Heart left ventricle (tissue), 16 donors: ENCODE measurements at regions of chr6 and their contacts with region 1.

Region 1: GRCh38 chr6:16964553-16965501 is 137.0 kb upstream of the STMND1 start:
- DNase-seq: peak; percentile 58 to 82 (median 70)
- ATAC-seq: peak; percentile 67 to 93 (median 90)
- H3K4me3 ChIP-seq: peak overlapping the region in 2 of 12 donors; percentile 21 to 22
- H3K27ac ChIP-seq: no peak overlapping the region
- H3K4me1 ChIP-seq: peaks cover 0 to 8% (median 4%) of the 10 kb centered on the region in 12 donors
- H3K27me3 ChIP-seq: peaks cover 0 to 4% (median 0%) of the 10 kb centered on the region in 9 donors
- CTCF ChIP-seq: peak; percentile 72 to 89 (median 84)
- POLR2A ChIP-seq: no peak

Region 2: DNA sequence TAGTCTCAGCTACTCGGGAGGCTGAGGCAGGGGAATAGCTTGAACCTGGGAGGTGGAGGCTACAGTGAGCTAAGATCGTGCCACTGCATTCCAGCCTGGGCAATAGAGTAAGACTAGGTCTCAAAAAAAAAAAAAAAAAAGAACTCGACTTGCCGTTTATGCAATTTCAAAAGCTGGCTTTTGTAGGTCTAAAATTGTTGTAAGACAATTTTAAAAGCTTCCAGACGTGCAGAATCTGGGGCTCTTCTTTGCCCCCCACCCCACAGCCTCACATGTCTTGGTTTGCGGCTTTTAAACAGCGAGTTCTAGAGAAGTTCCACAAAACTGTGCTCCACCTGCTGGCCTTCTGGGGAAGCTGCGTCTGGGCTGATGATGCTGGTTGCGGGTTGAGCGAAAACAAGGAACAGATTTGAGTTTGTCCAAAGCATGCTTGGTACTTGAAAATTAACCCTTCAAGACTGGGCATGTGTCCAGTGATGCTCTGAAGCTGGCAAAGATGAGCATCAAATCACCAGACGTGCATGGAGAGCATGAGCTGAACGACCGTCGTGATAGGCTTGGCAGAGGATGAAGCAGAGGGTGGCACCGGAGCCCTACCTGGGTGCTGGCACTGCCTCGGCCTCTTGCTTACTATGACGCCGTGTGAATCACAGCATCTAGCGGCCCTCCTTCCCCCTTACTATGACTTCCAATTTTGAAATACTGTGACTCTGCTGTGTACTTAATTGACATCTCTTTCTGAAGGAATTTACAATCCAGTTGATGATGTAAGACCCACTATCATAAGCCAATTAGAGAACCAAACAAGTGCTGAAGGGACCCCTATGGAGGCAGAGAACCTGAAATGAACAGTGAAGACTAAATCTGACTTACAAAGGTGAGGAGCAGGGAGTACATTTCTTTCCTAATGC is 555.0 kb before region 1 on chr6:
- intact Hi-C with region 1: loop called in 1 of 10 experiments (anchors 10 kb)
- DNase-seq: peak in 4 of 5 donors; percentile 48 to 68 (median 58)
- ATAC-seq: peak in 3 of 4 donors; percentile 53 to 70 (median 61)
- H3K4me3 ChIP-seq: no peak overlapping the region
- H3K27ac ChIP-seq: no peak overlapping the region
- H3K4me1 ChIP-seq: peaks cover 0 to 55% (median 17%) of the 10 kb centered on the region in 12 donors
- H3K27me3 ChIP-seq: no peaks in the 10 kb centered on the region
- CTCF ChIP-seq: peak; percentile 64 to 88 (median 80)
- POLR2A ChIP-seq: no peak

Region 3: DNA sequence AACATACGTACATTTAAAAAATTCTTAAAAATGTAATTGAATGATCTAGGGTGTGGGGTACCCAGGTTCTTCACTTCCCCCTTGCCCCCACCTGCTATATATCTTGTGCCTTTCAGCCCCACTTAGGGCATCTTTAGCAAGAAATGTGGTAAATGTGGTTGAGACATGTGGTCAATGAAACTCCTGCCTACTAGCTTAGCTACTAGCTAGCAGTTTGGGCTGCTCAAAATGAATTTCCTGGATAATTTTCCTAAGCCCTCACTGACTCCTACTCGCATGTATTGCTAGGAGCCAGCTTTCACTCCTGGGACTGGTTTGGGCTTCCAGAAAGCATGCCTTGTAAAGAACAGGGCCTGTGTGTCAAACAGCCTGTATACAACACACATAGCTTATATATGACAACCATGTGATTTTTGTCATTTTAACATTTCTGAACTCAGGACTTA is 460.8 kb before region 1 on chr6:
- intact Hi-C with region 1: loop called in 1 of 10 experiments (anchors 10 kb)
- DNase-seq: no peak
- ATAC-seq: peak in 1 of 4 donors; percentile 13
- H3K4me3 ChIP-seq: no peak overlapping the region
- H3K27ac ChIP-seq: no peak overlapping the region
- H3K4me1 ChIP-seq: peaks cover 0 to 26% (median 14%) of the 10 kb centered on the region in 12 donors
- H3K27me3 ChIP-seq: no peaks in the 10 kb centered on the region
- CTCF ChIP-seq: no peak
- POLR2A ChIP-seq: no peak

Region 4: GRCh38 chr6:16514249-16514648 is 450.6 kb before region 1 on chr6:
- intact Hi-C with region 1: loop called in 6 of 10 experiments (anchors 5 to 10 kb)
- DNase-seq: no peak
- ATAC-seq: peak; percentile 27 to 57 (median 30)
- H3K4me3 ChIP-seq: no peak overlapping the region
- H3K27ac ChIP-seq: no peak overlapping the region
- H3K4me1 ChIP-seq: peaks cover 0 to 60% (median 35%) of the 10 kb centered on the region in 12 donors
- H3K27me3 ChIP-seq: no peaks in the 10 kb centered on the region
- CTCF ChIP-seq: peak in 11 of 12 donors; percentile 22 to 61 (median 36)
- POLR2A ChIP-seq: no peak

Region 5: GRCh38 chr6:16770701-16771569 is 193.9 kb before region 1 on chr6:
- intact Hi-C with region 1: loop called in 7 of 10 experiments (anchors 2 to 5 kb)
- DNase-seq: peak; percentile 80 to 91 (median 84)
- ATAC-seq: peak; percentile 78 to 91 (median 85)
- H3K4me3 ChIP-seq: no peak overlapping the region
- H3K27ac ChIP-seq: peak overlapping the region in 4 of 12 donors; percentile 11 to 63 (median 28)
- H3K4me1 ChIP-seq: peaks cover 0 to 45% (median 31%) of the 10 kb centered on the region in 12 donors
- H3K27me3 ChIP-seq: no peaks in the 10 kb centered on the region
- CTCF ChIP-seq: peak; percentile 88 to 99 (median 93)
- POLR2A ChIP-seq: no peak

Region 6: DNA sequence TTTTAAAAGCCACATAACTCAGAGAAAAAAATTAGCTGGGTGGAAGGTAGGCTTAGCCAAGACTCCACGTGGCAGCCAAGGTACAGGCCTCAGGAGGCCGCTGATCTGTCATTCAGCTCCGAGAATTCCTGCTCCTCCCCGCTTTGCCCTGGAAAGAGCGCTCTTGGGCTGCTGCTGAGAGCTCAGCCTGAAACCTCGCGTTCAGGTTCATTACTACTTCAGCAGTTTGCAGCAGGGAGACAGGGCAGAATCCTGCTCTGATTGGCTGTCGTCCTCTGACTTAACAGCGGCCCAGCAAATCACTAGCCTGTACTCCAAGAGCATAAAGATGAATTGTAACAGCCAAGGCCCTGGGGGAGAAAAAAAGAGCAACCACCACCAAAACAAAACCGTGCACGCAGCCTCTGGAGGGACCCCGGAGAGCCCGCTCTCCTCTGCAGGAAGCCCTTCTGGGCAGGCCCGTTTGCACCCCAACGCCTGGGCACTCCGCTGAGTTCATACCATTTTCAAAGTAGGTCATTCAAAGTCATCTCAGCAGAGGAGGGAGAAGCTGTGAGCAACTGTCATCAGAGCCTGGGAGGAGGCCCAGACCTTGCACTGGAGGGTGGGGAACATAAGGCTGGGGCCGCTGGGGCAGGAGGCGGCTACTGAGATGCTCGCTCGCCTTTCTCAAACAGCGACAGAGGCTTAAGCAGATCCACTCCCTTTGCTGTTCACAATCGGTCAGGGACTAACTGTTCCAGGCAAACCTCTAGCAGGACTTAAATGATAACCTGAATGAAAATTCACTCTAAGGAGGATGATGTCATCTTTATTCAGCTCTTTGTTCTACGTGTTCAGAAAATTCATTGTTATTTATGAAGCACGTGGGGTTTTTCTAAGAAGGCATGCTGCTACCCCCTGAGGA is 161.3 kb before region 1 on chr6:
- intact Hi-C with region 1: loop called in 1 of 10 experiments (anchors 10 kb)
- DNase-seq: peak; percentile 64 to 71 (median 66)
- ATAC-seq: peak; percentile 79 to 92 (median 88)
- H3K4me3 ChIP-seq: peak overlapping the region in 9 of 12 donors; percentile 12 to 48 (median 39)
- H3K27ac ChIP-seq: peak overlapping the region in 11 of 12 donors; percentile 44 to 86 (median 78)
- H3K4me1 ChIP-seq: peaks cover 0 to 61% (median 38%) of the 10 kb centered on the region in 12 donors
- H3K27me3 ChIP-seq: no peaks in the 10 kb centered on the region
- CTCF ChIP-seq: peak in 1 of 12 donors; percentile 22
- POLR2A ChIP-seq: no peak

Region 7: DNA sequence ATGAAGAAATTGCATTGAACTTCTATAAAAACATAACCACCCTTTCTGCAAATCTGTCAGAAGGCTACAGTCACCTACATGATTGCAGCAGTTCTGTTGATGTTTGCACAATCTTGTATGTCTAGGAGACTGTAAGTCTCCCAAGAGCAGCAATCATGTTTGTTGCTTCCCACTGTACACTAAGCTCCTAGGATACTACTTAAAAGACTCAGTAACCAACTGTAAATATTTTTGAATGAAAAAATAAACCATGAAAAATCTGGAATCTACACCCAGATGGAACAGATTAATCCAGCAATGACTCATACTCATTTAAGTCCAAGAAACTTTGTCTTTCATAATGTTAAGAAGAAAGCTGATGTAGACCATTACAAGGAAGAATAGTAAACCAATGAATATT is 35.0 kb before region 1 on chr6:
- intact Hi-C with region 1: no loop called
- DNase-seq: no peak
- ATAC-seq: peak in 1 of 4 donors; percentile 24
- H3K4me3 ChIP-seq: no peak overlapping the region
- H3K27ac ChIP-seq: no peak overlapping the region
- H3K4me1 ChIP-seq: no peaks in the 10 kb centered on the region
- H3K27me3 ChIP-seq: peaks cover 0 to 4% (median 0%) of the 10 kb centered on the region in 9 donors
- CTCF ChIP-seq: no peak
- POLR2A ChIP-seq: no peak

Region 8: GRCh38 chr6:17086469-17086868 is 121.6 kb after region 1 on chr6:
- intact Hi-C with region 1: loop called in 4 of 10 experiments (anchors 5 to 10 kb)
- DNase-seq: peak in 3 of 5 donors; percentile 45 to 46 (median 46)
- ATAC-seq: peak; percentile 75 to 85 (median 78)
- H3K4me3 ChIP-seq: no peak overlapping the region
- H3K27ac ChIP-seq: no peak overlapping the region
- H3K4me1 ChIP-seq: peaks cover 0 to 7% (median 0%) of the 10 kb centered on the region in 12 donors
- H3K27me3 ChIP-seq: no peaks in the 10 kb centered on the region
- CTCF ChIP-seq: peak; percentile 44 to 72 (median 66)
- POLR2A ChIP-seq: no peak